ENCODE measurements at regions of chr3 and their contacts with region 1.

Region 1: GRCh38 chr3:184711493-184712247 is at the start of gene MAGEF1:
- DNase-seq: peak; percentile 35 to 49 (median 46)
- H3K4me3 ChIP-seq: peak within 1 kb of the TSS; percentile 50 to 73 (median 61)
- H3K4me3 Mint-ChIP-seq: peak within 1 kb of the TSS; percentile 77 to 90
- H3K27ac ChIP-seq: peak within 1 kb of the TSS; percentile 56 to 60
- H3K27ac Mint-ChIP-seq: peak within 1 kb of the TSS; percentile 52 to 85 (median 80)
- H3K4me1 ChIP-seq: peaks cover 40 to 44% of the 10 kb centered on the region in 2 donors
- H3K4me1 Mint-ChIP-seq: peaks cover 33% of the 10 kb centered on the region
- H3K27me3 ChIP-seq: no peaks in the 10 kb centered on the region
- H3K27me3 Mint-ChIP-seq: peaks cover 1 to 6% (median 2%) of the 10 kb centered on the region in 3 donors
- CTCF ChIP-seq: no peak
- polyA plus RNA-seq, gene MAGEF1: 1.7 to 14.8 (median 12.2) TPM

Region 2: GRCh38 chr3:184583578-184584425 is 127.9 kb before region 1 on chr3:
- intact Hi-C with region 1: loop called in 1 of 2 experiments (anchors 10 kb)
- DNase-seq: no peak
- H3K4me3 ChIP-seq: peak overlapping the region in 2 of 3 experiments; percentile 18 to 72
- H3K4me3 Mint-ChIP-seq: peak overlapping the region; percentile 66 to 69
- H3K27ac ChIP-seq: no peak overlapping the region
- H3K27ac Mint-ChIP-seq: no peak overlapping the region
- H3K4me1 ChIP-seq: peaks cover 58 to 77% of the 10 kb centered on the region in 2 donors
- H3K4me1 Mint-ChIP-seq: peaks cover 47% of the 10 kb centered on the region
- H3K27me3 ChIP-seq: peaks cover 0 to 11% of the 10 kb centered on the region in 2 donors
- H3K27me3 Mint-ChIP-seq: peaks cover 19 to 29% (median 27%) of the 10 kb centered on the region in 3 donors
- CTCF ChIP-seq: peak; percentile 26

Region 3: DNA sequence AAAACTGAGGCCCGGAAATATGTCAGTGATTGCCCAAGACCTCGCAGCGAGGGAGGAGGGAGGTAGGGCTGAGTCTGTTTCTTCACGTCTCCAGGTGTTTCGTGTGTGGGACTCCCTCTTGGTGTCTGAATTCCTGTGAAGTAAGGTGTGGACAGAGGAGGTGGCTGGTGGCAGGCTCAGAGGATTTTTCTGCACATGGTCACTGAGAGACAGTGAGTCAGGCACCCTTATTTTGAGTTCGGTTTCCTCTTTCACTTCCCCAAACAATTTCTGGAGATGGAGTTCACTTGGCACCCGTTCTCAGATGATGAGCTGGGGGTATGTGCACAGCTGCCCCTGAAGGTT is 54.0 kb after region 1 on chr3:
- intact Hi-C with region 1: loop called in 1 of 2 experiments (anchors 10 kb)
- DNase-seq: peak; percentile 79 to 88 (median 87)
- H3K4me3 ChIP-seq: peak overlapping the region in 1 of 3 experiments; percentile 27
- H3K4me3 Mint-ChIP-seq: peak overlapping the region in 1 of 2 donors; percentile 73
- H3K27ac ChIP-seq: peak overlapping the region in 1 of 2 donors; percentile 60
- H3K27ac Mint-ChIP-seq: peak overlapping the region; percentile 58 to 92 (median 85)
- H3K4me1 ChIP-seq: peaks cover 33 to 46% of the 10 kb centered on the region in 2 donors
- H3K4me1 Mint-ChIP-seq: peaks cover 42% of the 10 kb centered on the region
- H3K27me3 ChIP-seq: no peaks in the 10 kb centered on the region
- H3K27me3 Mint-ChIP-seq: peaks cover 1 to 8% (median 7%) of the 10 kb centered on the region in 3 donors
- CTCF ChIP-seq: no peak